Mammary epithelial cell (primary cell): ENCODE measurements at regions of chr5 and their contacts with region 1.

Region 1: DNA sequence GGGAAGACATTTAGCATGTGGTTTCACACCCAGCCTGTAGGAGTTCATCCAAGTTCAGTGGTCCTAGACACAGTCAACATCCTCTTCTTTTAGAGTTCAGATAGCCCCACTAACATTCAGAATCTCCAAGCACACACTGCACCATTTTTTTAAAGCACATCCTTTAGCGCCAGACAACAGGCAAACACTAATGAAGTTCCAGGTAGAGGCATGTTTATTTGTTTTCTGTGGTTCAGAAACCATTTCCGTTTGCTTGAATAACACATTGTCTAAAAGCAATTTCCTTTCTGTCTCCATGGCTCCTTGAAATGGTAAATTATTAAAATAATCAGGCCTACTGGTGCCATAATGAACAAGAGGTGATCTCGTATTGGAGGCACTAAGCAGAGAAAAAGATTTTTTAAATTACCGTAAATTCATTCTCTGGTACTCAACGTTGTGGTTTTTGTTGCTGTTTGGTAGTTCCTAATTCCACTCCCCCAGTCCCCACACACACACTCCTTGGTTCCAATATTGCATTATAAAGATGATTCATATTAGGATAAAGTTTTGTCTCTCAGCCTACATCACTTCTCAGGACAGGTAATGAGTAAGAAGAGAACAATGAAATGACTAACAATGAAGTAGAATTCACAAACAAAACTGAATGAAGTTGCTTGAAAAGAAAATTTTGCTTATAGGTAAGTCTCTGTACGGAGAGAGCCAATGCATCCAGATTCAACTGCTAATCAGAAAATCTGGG is 153.1 kb downstream of the PCSK1 start:
- DNase-seq: peak; percentile 94
- H3K4me3 ChIP-seq: peak overlapping the region in 2 of 3 experiments; percentile 19 to 25
- H3K27ac ChIP-seq: peak overlapping the region; percentile 97
- H3K4me1 ChIP-seq: peaks cover 36% of the 10 kb centered on the region
- H3K27me3 ChIP-seq: no peaks in the 10 kb centered on the region
- CTCF ChIP-seq: peak in 1 of 2 donors; percentile 9

Region 2: DNA sequence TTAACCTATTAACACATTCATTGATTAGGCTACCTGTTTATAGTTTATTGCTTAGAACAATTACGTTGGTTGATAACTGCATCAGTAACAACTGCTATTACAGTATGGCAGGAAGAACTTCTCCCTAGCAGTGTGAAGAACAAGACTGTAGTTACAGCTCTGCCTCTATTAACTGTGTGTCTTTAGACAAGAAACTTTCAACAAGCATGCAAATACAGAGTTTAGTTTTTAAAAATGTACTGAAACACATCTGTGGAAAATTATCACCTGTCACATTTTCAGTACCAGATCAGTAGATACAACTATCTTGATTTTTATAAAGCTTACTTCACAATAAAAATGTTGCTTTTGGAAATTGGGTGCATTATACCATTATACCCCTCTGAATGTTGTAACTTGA is 340.5 kb before region 1 on chr5:
- CTCF ChIA-PET with region 1: no interaction called
- dilution Hi-C with region 1: no loop called
- in situ Hi-C with region 1: no loop called
- intact Hi-C with region 1: no loop called
- DNase-seq: no peak
- H3K4me3 ChIP-seq: no peak overlapping the region
- H3K27ac ChIP-seq: no peak overlapping the region
- H3K4me1 ChIP-seq: peaks cover 11% of the 10 kb centered on the region
- H3K27me3 ChIP-seq: no peaks in the 10 kb centered on the region
- CTCF ChIP-seq: no peak

Region 3: DNA sequence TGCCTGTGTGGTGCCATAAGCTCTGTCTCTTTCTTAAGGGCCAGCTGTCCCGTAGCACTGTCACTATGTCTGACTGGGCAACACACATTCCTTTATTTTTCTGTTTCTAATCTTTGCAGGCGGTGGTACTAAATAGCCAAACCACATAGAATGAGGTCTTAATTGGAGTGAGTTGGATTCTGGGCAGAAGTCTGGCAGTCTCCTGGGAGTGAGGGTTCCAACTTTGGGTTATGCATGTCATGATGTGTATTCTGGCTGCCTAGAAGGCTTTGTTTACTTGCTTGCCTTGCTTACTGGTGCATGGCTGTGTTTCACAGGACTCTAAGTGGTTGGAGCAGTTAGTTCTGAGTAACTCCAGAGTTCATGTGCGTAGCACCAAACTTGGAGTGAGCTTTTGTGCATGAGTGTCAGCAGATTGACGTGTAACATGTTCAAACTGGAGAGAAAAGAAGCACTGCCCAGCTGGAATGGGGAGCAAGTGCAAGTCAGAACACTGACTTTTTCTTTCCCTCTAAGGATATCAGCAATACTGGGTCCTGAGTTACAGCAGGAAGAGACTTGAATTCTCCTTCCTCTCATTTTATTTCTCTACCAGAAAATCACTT is 32.8 kb before region 1 on chr5:
- CTCF ChIA-PET with region 1: no interaction called
- dilution Hi-C with region 1: no loop called
- in situ Hi-C with region 1: no loop called
- intact Hi-C with region 1: loop called (anchors 5 kb)
- DNase-seq: peak; percentile 93
- H3K4me3 ChIP-seq: no peak overlapping the region
- H3K27ac ChIP-seq: peak overlapping the region; percentile 61
- H3K4me1 ChIP-seq: peaks cover 41% of the 10 kb centered on the region
- H3K27me3 ChIP-seq: no peaks in the 10 kb centered on the region
- CTCF ChIP-seq: no peak

Region 4: GRCh38 chr5:96324708-96325107 is 44.7 kb after region 1 on chr5:
- CTCF ChIA-PET with region 1: no interaction called
- dilution Hi-C with region 1: no loop called
- in situ Hi-C with region 1: no loop called
- intact Hi-C with region 1: loop called (anchors 2 kb)
- DNase-seq: peak; percentile 87
- H3K4me3 ChIP-seq: no peak overlapping the region
- H3K27ac ChIP-seq: peak overlapping the region; percentile 66
- H3K4me1 ChIP-seq: peaks cover 26% of the 10 kb centered on the region
- H3K27me3 ChIP-seq: no peaks in the 10 kb centered on the region
- CTCF ChIP-seq: no peak